ENCODE measurements at regions of chr20 and their contacts with region 1.

Region 1: GRCh38 chr20:48620519-48621254 is 207.1 kb downstream of the PREX1 start:
- DNase-seq: peak; percentile 86
- ATAC-seq: peak; percentile 90
- H3K4me3 ChIP-seq: 0 out of 6 replicates have a peak overlapping the region, but pooled peaks of 1 of the 3 experiments have one; percentile 5
- H3K27ac ChIP-seq: no peak overlapping the region
- H3K4me1 ChIP-seq: peaks cover 11% of the 10 kb centered on the region
- H3K27me3 ChIP-seq: peaks cover 17 to 28% of the 10 kb centered on the region in 2 experiments; a peak in 3 of 5 replicates
- CTCF ChIP-seq: peak; percentile 98
- EP300 ChIP-seq: no peak
- POLR2A ChIP-seq: no peak
- RAD21 ChIP-seq: peak; percentile 99

Region 2: GRCh38 chr20:47677635-47678453 is 942.8 kb before region 1 on chr20:
- CTCF ChIA-PET with region 1: interaction called, 40 read pairs
- POLR2A ChIA-PET with region 1: no interaction called
- in situ Hi-C with region 1: loop called (anchors 5 kb)
- intact Hi-C with region 1: loop called (anchors 1 kb)
- DNase-seq: peak; percentile 69
- ATAC-seq: peak; percentile 64
- H3K4me3 ChIP-seq: no peak overlapping the region
- H3K27ac ChIP-seq: no peak overlapping the region
- H3K4me1 ChIP-seq: peaks cover 40% of the 10 kb centered on the region
- H3K27me3 ChIP-seq: no peaks in the 10 kb centered on the region
- CTCF ChIP-seq: peak; percentile 100
- EP300 ChIP-seq: no peak
- POLR2A ChIP-seq: no peak
- RAD21 ChIP-seq: peak; percentile 99

Region 3: GRCh38 chr20:47854163-47854562 is 766.5 kb before region 1 on chr20:
- CTCF ChIA-PET with region 1: no interaction called
- POLR2A ChIA-PET with region 1: no interaction called
- in situ Hi-C with region 1: no loop called
- intact Hi-C with region 1: loop called (anchors 1 kb)
- DNase-seq: no peak
- ATAC-seq: no peak
- H3K4me3 ChIP-seq: no peak overlapping the region
- H3K27ac ChIP-seq: no peak overlapping the region
- H3K4me1 ChIP-seq: peaks cover 15% of the 10 kb centered on the region
- H3K27me3 ChIP-seq: peaks cover 8 to 32% of the 10 kb centered on the region in 2 experiments; a peak in 4 of 5 replicates
- CTCF ChIP-seq: no peak
- EP300 ChIP-seq: no peak
- POLR2A ChIP-seq: no peak
- RAD21 ChIP-seq: no peak

Region 4: GRCh38 chr20:48329635-48330277 is 290.9 kb before region 1 on chr20:
- CTCF ChIA-PET with region 1: interaction called, 11 read pairs
- POLR2A ChIA-PET with region 1: no interaction called
- in situ Hi-C with region 1: no loop called
- intact Hi-C with region 1: no loop called
- DNase-seq: peak; percentile 32
- ATAC-seq: peak; percentile 84
- H3K4me3 ChIP-seq: no peak overlapping the region
- H3K27ac ChIP-seq: no peak overlapping the region
- H3K4me1 ChIP-seq: peaks cover 5% of the 10 kb centered on the region; the same call in 1 of the 2 replicates
- H3K27me3 ChIP-seq: peaks cover 1 to 23% of the 10 kb centered on the region in 2 experiments; a peak in 4 of 5 replicates
- CTCF ChIP-seq: peak; percentile 80
- EP300 ChIP-seq: no peak
- POLR2A ChIP-seq: no peak
- RAD21 ChIP-seq: peak; percentile 87

Region 5: GRCh38 chr20:48405669-48406308 is 214.9 kb before region 1 on chr20:
- CTCF ChIA-PET with region 1: no interaction called
- POLR2A ChIA-PET with region 1: no interaction called
- in situ Hi-C with region 1: loop called (anchors 25 kb)
- intact Hi-C with region 1: loop called (anchors 1 kb)
- DNase-seq: peak; percentile 56
- ATAC-seq: peak; percentile 70
- H3K4me3 ChIP-seq: no peak overlapping the region
- H3K27ac ChIP-seq: no peak overlapping the region
- H3K4me1 ChIP-seq: peaks cover 65% of the 10 kb centered on the region
- H3K27me3 ChIP-seq: no peaks in the 10 kb centered on the region; a peak in 2 of 5 replicates
- CTCF ChIP-seq: peak; percentile 54; the same call in 1 of the 2 replicates
- EP300 ChIP-seq: no peak
- POLR2A ChIP-seq: no peak
- RAD21 ChIP-seq: peak; percentile 47; the same call in 1 of the 2 replicates

Region 6: GRCh38 chr20:48679550-48680187 is 59.0 kb after region 1 on chr20:
- CTCF ChIA-PET with region 1: no interaction called
- POLR2A ChIA-PET with region 1: no interaction called
- in situ Hi-C with region 1: no loop called
- intact Hi-C with region 1: no loop called
- DNase-seq: no peak
- ATAC-seq: no peak
- H3K4me3 ChIP-seq: no peak overlapping the region
- H3K27ac ChIP-seq: no peak overlapping the region
- H3K4me1 ChIP-seq: peaks cover 13% of the 10 kb centered on the region
- H3K27me3 ChIP-seq: peaks cover 3 to 41% of the 10 kb centered on the region in 2 experiments; a peak in 4 of 5 replicates
- CTCF ChIP-seq: no peak
- EP300 ChIP-seq: no peak
- POLR2A ChIP-seq: no peak
- RAD21 ChIP-seq: no peak

Measured in HepG2 (cell line).